Caco-2 (cell line): ENCODE measurements at regions of chr3 and their contacts with region 1.

Region 1: GRCh38 chr3:71859123-71859519 is 74.2 kb upstream of the PROK2 start:
- DNase-seq: no peak
- H3K4me3 ChIP-seq: no peak overlapping the region
- H3K4me3 Mint-ChIP-seq: no peak overlapping the region
- H3K27ac Mint-ChIP-seq: no peak overlapping the region
- H3K4me1 ChIP-seq: no peaks in the 10 kb centered on the region
- H3K4me1 Mint-ChIP-seq: no peaks in the 10 kb centered on the region
- H3K27me3 ChIP-seq: no peaks in the 10 kb centered on the region
- H3K27me3 Mint-ChIP-seq: peaks cover 16% of the 10 kb centered on the region
- CTCF ChIP-seq: peak in 1 of 2 experiments; percentile 52

Region 2: GRCh38 chr3:71725279-71725991 is 133.7 kb before region 1 on chr3 and contains the start of gene EIF4E3:
- CTCF ChIA-PET with region 1: interaction called, 9 read pairs
- POLR2A ChIA-PET with region 1: no interaction called
- intact Hi-C with region 1: loop called (anchors 1 kb)
- DNase-seq: peak in 1 of 2 experiments; percentile 32
- H3K4me3 ChIP-seq: peak within 1 kb of the TSS; percentile 76
- H3K4me3 Mint-ChIP-seq: peak within 1 kb of the TSS; percentile 77
- H3K27ac Mint-ChIP-seq: no peak within 1 kb of the TSS
- H3K4me1 ChIP-seq: 0 out of 2 replicates have a peak, but pooled peaks cover 6% of the 10 kb centered on the region
- H3K4me1 Mint-ChIP-seq: no peaks in the 10 kb centered on the region
- H3K27me3 ChIP-seq: peaks cover 3% of the 10 kb centered on the region
- H3K27me3 Mint-ChIP-seq: peaks cover 33% of the 10 kb centered on the region
- CTCF ChIP-seq: no peak
- total RNA-seq, gene EIF4E3: 1.2 and 1.7 TPM in 2 replicates

Region 3: DNA sequence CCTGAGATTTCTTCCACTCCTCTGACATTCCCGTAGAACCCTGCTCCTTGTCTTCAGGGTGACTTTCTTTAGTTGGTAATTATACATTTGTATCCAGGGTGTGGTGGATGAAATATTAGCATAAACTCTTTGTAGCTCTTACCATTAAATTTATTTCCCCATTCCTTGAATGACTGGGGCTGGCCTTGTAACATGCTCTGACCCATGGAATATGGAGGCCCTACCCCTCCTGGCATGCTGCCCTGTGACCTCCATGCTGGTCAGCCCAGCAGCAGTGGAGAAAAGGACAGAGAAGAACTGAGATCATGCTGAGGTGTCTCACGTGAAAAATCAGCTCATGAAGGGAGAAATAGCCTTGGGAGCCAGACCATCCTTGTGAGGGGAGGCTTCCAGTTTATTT is 21.9 kb after region 1 on chr3:
- CTCF ChIA-PET with region 1: no interaction called
- POLR2A ChIA-PET with region 1: no interaction called
- intact Hi-C with region 1: no loop called
- DNase-seq: no peak
- H3K4me3 ChIP-seq: no peak overlapping the region
- H3K4me3 Mint-ChIP-seq: no peak overlapping the region
- H3K27ac Mint-ChIP-seq: no peak overlapping the region
- H3K4me1 ChIP-seq: no peaks in the 10 kb centered on the region
- H3K4me1 Mint-ChIP-seq: no peaks in the 10 kb centered on the region
- H3K27me3 ChIP-seq: no peaks in the 10 kb centered on the region
- H3K27me3 Mint-ChIP-seq: peaks cover 9% of the 10 kb centered on the region
- CTCF ChIP-seq: no peak

Region 4: GRCh38 chr3:71930056-71930991 is 71.2 kb after region 1 on chr3:
- CTCF ChIA-PET with region 1: no interaction called
- POLR2A ChIA-PET with region 1: no interaction called
- intact Hi-C with region 1: no loop called
- DNase-seq: peak in 1 of 2 experiments; percentile 19
- H3K4me3 ChIP-seq: no peak overlapping the region
- H3K4me3 Mint-ChIP-seq: no peak overlapping the region
- H3K27ac Mint-ChIP-seq: no peak overlapping the region
- H3K4me1 ChIP-seq: no peaks in the 10 kb centered on the region
- H3K4me1 Mint-ChIP-seq: no peaks in the 10 kb centered on the region
- H3K27me3 ChIP-seq: no peaks in the 10 kb centered on the region
- H3K27me3 Mint-ChIP-seq: peaks cover 20% of the 10 kb centered on the region
- CTCF ChIP-seq: peak; percentile 44 to 54